Activated CD4-positive, alpha-beta memory T cell treated with anti-CD3 and anti-CD28 coated beads for 36 hours (primary cell): ENCODE measurements at regions of chr5 and their contacts with region 1.

Region 1: GRCh38 chr5:139147483-139148087 is 50.6 kb downstream of the SIL1 start:
- DNase-seq: no peak
- H3K4me3 Mint-ChIP-seq: no peak overlapping the region
- H3K27ac Mint-ChIP-seq: no peak overlapping the region
- H3K4me1 Mint-ChIP-seq: peaks cover 46% of the 10 kb centered on the region
- H3K27me3 Mint-ChIP-seq: no peaks in the 10 kb centered on the region

Region 2: DNA sequence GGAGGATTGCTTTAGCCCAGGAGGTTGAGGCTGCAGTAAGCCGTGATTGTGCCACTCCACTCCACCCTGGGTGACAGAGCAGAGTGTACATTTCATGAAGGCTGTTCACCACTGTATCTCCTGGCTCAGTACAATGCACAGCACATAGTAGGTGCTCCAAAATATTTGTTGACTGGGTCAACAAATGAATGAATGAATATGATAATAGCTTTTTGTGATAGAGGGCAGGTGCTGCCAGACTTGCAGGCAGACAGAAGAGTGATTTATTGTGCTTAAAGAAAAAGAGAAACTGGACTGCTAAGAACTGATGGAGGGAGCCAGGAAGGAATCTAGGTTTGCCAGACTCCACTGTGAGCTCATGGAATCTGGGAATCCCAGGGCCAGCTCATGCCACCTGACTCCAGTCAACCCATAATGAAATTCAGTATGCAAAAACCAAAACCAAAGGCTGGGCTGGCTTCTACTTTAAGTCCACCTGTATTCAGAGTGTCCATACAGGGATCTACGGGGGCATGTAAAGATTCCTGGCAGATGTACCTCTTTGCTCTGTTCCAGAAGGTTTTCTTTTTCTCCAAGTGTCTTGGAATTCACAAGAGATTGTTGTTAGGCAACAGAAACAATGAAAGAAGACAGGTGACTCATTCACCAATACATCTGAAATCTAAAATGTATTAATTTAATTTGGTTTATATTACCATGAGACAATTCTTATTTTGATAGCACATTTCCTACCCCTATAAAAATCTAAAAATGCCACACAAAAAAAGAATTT is 409.9 kb before region 1 on chr5:
- CTCF ChIA-PET with region 1: no interaction called
- POLR2A ChIA-PET with region 1: no interaction called
- intact Hi-C with region 1: loop called (anchors 1 kb)
- DNase-seq: no peak
- H3K4me3 Mint-ChIP-seq: no peak overlapping the region
- H3K27ac Mint-ChIP-seq: no peak overlapping the region
- H3K4me1 Mint-ChIP-seq: peaks cover 21% of the 10 kb centered on the region
- H3K27me3 Mint-ChIP-seq: peaks cover 2% of the 10 kb centered on the region

Region 3: DNA sequence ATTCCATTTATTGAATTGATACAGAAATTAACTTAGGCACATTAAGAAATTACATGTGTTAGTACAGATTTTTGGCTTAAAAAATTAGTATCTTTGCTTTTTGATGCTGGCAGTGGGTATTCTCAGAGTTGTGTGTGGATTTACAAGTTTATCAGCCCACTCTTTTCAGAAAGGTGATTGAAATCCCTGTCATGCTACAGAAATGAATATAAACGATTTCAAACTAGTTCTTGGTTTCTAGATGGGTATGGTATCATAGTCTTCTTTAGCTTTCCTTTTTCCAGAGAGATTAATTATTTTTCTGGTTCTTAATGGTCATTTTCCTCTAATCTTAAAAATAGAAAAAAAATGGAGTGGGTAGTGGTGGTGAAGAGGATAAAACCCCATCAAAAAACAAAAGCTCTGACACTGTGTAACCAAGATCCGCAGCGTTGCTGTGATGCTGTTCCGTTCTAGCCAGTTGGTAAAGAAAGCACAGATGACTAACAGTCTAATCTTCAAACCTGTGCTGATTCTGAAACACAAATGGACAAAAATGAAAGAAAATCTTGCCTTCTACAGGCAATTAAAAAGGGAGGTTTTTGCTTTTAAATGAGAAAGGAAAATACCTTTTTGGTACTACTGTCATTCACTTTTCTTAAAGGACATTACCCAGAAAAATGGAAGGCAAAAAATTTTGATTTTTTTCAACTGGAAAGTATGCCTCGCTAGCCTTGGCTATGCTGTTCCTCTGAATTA is 277.7 kb before region 1 on chr5:
- CTCF ChIA-PET with region 1: no interaction called
- POLR2A ChIA-PET with region 1: no interaction called
- intact Hi-C with region 1: loop called (anchors 1 kb)
- DNase-seq: peak; percentile 32
- H3K4me3 Mint-ChIP-seq: peak overlapping the region; percentile 24
- H3K27ac Mint-ChIP-seq: peak overlapping the region; percentile 79
- H3K4me1 Mint-ChIP-seq: peaks cover 20% of the 10 kb centered on the region
- H3K27me3 Mint-ChIP-seq: peaks cover 17% of the 10 kb centered on the region

Region 4: GRCh38 chr5:139022528-139022927 is 125.1 kb before region 1 on chr5:
- CTCF ChIA-PET with region 1: no interaction called
- POLR2A ChIA-PET with region 1: no interaction called
- intact Hi-C with region 1: no loop called
- DNase-seq: no peak
- H3K4me3 Mint-ChIP-seq: no peak overlapping the region
- H3K27ac Mint-ChIP-seq: no peak overlapping the region
- H3K4me1 Mint-ChIP-seq: no peaks in the 10 kb centered on the region
- H3K27me3 Mint-ChIP-seq: no peaks in the 10 kb centered on the region

Region 5: GRCh38 chr5:139065306-139065705 is 82.3 kb before region 1 on chr5:
- CTCF ChIA-PET with region 1: no interaction called
- POLR2A ChIA-PET with region 1: no interaction called
- intact Hi-C with region 1: loop called (anchors 5 kb)
- DNase-seq: no peak
- H3K4me3 Mint-ChIP-seq: no peak overlapping the region
- H3K27ac Mint-ChIP-seq: no peak overlapping the region
- H3K4me1 Mint-ChIP-seq: peaks cover 11% of the 10 kb centered on the region
- H3K27me3 Mint-ChIP-seq: no peaks in the 10 kb centered on the region

Region 6: GRCh38 chr5:139517683-139518564 is 370.3 kb after region 1 on chr5:
- CTCF ChIA-PET with region 1: no interaction called
- POLR2A ChIA-PET with region 1: no interaction called
- intact Hi-C with region 1: no loop called
- DNase-seq: peak; percentile 93
- H3K4me3 Mint-ChIP-seq: peak overlapping the region; percentile 82
- H3K27ac Mint-ChIP-seq: peak overlapping the region; percentile 81
- H3K4me1 Mint-ChIP-seq: peaks cover 32% of the 10 kb centered on the region
- H3K27me3 Mint-ChIP-seq: no peaks in the 10 kb centered on the region